Panc1 (cell line): ENCODE measurements at regions of chr1 and their contacts with region 1.

Region 1: DNA sequence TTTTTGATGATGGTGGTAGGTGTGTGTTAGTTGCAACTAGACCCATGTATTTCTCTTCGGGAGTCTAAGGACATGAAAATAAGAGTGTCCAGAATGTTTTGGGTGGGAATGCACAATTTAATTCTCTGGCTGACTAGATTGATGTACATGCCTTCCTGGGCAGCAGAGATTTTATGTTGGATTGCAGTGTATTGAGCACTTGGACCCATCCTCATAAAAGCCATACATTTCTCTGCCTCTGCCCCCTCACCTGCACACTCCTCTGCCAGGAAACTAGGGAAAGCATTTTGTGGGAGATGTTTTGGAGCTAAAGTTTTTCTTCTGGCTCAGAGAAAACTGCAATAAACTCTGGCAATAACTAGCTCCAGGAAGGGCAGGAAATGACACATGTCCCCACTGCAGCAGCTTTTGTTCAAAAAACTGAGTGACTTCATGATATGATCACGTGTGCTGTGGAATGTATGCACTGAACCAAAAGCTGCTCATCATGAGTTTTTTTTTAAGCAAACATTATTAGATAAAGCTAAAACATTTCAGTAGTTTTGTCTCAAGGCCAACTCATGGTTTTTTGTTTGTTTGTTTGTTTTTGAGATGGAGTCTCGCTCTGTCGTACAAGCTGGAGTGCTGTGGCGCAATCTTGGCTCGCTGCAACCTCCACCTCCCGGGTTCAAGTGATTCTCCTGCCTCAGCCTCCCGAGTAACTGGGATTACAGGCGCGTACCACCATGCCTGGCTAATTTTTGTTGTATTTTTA is 17.6 kb downstream of the RIT1 start:
- DNase-seq: peak; percentile 93
- ATAC-seq: peak; percentile 81
- H3K4me3 ChIP-seq: peak overlapping the region in 1 of 2 experiments; percentile 6; a peak in 2 of 4 replicates
- H3K27ac ChIP-seq: peak overlapping the region; percentile 44; the same call in 1 of the 2 replicates
- H3K4me1 ChIP-seq: peaks cover 14% of the 10 kb centered on the region
- H3K27me3 ChIP-seq: no peaks in the 10 kb centered on the region
- CTCF ChIP-seq: no peak

Region 2: GRCh38 chr1:154304664-154305337 is 1588.8 kb before region 1 on chr1:
- CTCF ChIA-PET with region 1: no interaction called
- POLR2A ChIA-PET with region 1: interaction called, 12 read pairs
- in situ Hi-C with region 1: no loop called
- intact Hi-C with region 1: no loop called
- DNase-seq: no peak
- ATAC-seq: no peak; the same call in 1 of the 2 replicates
- H3K4me3 ChIP-seq: no peak overlapping the region
- H3K27ac ChIP-seq: no peak overlapping the region
- H3K4me1 ChIP-seq: no peaks in the 10 kb centered on the region
- H3K27me3 ChIP-seq: no peaks in the 10 kb centered on the region
- CTCF ChIP-seq: no peak

Region 3: GRCh38 chr1:156114101-156114916 is 220.7 kb after region 1 on chr1 and contains the start of gene LMNA:
- CTCF ChIA-PET with region 1: no interaction called
- POLR2A ChIA-PET with region 1: no interaction called
- in situ Hi-C with region 1: no loop called
- intact Hi-C with region 1: no loop called
- DNase-seq: peak; percentile 82
- ATAC-seq: peak; percentile 84
- H3K4me3 ChIP-seq: peak within 1 kb of the TSS; percentile 78 to 99
- H3K27ac ChIP-seq: peak within 1 kb of the TSS; percentile 96
- H3K4me1 ChIP-seq: peaks cover 41% of the 10 kb centered on the region
- H3K27me3 ChIP-seq: no peaks in the 10 kb centered on the region
- CTCF ChIP-seq: no peak
- total RNA-seq, gene LMNA: 691 TPM